GM23248 (cell line): ENCODE measurements at regions of chr1 and their contacts with region 1.

Region 1: GRCh38 chr1:111481387-111482221 is 7.8 kb downstream of the C1orf162 start:
- DNase-seq: peak; percentile 86
- H3K4me3 ChIP-seq: no peak overlapping the region
- H3K27ac ChIP-seq: no peak overlapping the region
- H3K4me1 ChIP-seq: peaks cover 10% of the 10 kb centered on the region
- H3K27me3 ChIP-seq: no peaks in the 10 kb centered on the region

Region 2: DNA sequence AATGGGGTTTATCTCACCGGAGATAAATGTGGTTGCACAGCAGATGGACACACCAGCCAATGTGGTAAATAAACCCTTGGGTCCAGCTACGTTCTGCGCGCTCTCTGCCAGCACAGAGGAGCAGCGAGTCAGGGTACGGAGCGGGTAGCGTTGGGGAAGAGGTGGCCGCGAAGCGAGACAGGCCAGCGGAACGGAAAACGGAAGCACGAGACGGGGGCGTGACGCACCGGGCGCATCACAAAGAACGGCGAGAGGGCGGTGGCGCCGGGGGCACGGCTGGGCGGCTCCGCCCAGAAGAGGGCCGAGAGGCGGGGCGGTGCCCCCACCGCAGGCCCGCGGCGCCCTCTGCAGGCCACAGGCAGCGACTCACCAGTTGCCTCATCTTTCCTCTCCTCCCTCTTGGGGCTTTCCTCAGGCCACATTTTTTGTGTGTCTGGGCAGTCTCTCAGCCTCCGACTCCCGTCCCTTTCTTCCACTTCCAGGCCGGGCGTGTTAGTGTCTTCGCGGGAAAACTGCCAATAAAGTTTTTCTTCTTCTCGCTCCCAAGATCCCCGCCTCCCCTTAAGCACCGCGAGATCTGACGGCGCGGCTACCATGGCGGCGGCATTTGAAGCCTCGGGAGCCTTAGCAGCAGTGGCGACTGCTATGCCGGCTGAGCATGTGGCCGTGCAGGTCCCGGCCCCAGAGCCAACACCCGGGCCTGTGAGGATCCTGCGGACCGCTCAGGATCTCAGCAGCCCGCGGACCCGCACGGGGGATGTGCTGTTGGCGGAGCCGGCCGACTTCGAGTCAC is 273.9 kb after region 1 on chr1 and contains the start of gene DDX20:
- in situ Hi-C with region 1: loop called (anchors 10 kb)
- DNase-seq: peak; percentile 99
- H3K4me3 ChIP-seq: peak within 1 kb of the TSS; percentile 94
- H3K27ac ChIP-seq: peak within 1 kb of the TSS; percentile 94
- H3K4me1 ChIP-seq: peaks cover 6% of the 10 kb centered on the region; the same call in 1 of the 2 replicates
- H3K27me3 ChIP-seq: no peaks in the 10 kb centered on the region
- total RNA-seq, gene DDX20: 20.1 and 24.2 TPM in 2 replicates

Region 3: GRCh38 chr1:112369392-112370285 is 888.0 kb after region 1 on chr1:
- in situ Hi-C with region 1: loop called (anchors 25 kb)
- DNase-seq: peak; percentile 91
- H3K4me3 ChIP-seq: no peak overlapping the region
- H3K27ac ChIP-seq: no peak overlapping the region
- H3K4me1 ChIP-seq: 0 out of 2 replicates have a peak, but pooled peaks cover 3% of the 10 kb centered on the region
- H3K27me3 ChIP-seq: 0 out of 2 replicates have a peak, but pooled peaks cover 7% of the 10 kb centered on the region